ENCODE measurements at regions of chr1 and their contacts with region 1.

Region 1: GRCh38 chr1:110209715-110210603 is at the start of gene KCNC4:
- DNase-seq: peak; percentile 91
- ATAC-seq: peak; percentile 89 to 93 (median 92)
- H3K4me3 ChIP-seq: peak within 1 kb of the TSS; percentile 51 to 95 (median 74)
- H3K27ac ChIP-seq: peak within 1 kb of the TSS; percentile 62 to 94 (median 90)
- H3K4me1 ChIP-seq: peaks cover 4 to 54% (median 39%) of the 10 kb centered on the region in 9 donors
- H3K27me3 ChIP-seq: peaks cover 0 to 24% (median 0%) of the 10 kb centered on the region in 7 donors
- CTCF ChIP-seq: peak in 2 of 9 donors; percentile 13 to 24
- total RNA-seq, gene KCNC4: 2.6 to 13.8 (median 6.1) TPM

Region 2: DNA sequence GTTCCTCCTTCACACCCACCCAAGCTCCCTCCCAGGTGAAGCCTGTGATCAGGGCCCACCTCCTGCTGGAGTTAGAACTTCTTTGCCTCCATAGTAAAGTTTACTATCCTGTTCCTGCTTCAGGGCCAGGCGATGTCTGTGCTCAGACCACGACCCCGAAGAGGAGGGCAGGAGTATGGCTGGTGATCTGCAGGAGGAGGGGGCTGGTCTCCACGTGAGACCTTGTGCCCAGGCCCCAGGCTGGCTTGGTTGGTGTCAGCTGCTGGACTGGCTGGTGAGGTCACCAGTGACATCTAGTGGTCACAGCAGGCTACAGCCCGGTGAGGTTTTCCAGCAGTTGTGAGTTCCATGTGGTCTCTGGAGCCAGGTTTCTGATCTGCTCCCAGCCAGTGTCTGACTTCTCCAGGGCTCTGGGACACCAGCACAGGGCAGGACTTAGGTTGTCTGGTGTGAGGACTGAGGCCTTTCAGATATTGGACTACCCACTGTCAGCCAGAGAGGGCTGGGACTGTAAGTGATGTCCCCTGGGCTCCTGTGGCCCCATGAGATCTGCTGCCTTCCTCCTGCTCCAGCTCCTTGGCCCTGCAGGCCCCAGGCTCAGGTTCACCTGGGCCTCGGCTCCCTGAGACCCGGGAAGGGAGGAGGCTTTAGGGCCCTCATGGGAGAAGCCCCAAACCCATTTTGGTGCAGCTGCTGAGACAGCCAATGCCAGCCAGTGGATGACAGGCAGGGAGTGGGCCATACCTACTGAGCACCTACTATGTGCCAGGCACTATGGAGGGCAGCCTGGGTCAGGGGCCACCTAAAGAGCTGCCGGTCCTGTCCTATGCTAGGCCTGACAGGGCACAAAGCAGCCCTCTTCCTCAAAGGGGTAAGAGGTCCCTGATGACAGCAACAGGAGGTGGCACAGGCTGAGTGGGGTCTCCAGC is 103.7 kb before region 1 on chr1:
- intact Hi-C with region 1: no loop called
- DNase-seq: peak; percentile 52 to 69
- ATAC-seq: peak; percentile 50 to 86 (median 84)
- H3K4me3 ChIP-seq: no peak overlapping the region
- H3K27ac ChIP-seq: no peak overlapping the region
- H3K4me1 ChIP-seq: peaks cover 0 to 18% (median 8%) of the 10 kb centered on the region in 9 donors
- H3K27me3 ChIP-seq: peaks cover 0 to 15% (median 0%) of the 10 kb centered on the region in 7 donors
- CTCF ChIP-seq: peak; percentile 84 to 97 (median 94)

Region 3: GRCh38 chr1:110235834-110236682 is 26.1 kb after region 1 on chr1:
- intact Hi-C with region 1: loop called in 1 of 10 experiments (anchors 2 kb)
- DNase-seq: no peak
- ATAC-seq: peak in 2 of 8 donors; percentile 21 to 60
- H3K4me3 ChIP-seq: no peak overlapping the region
- H3K27ac ChIP-seq: peak overlapping the region in 7 of 10 donors; percentile 36 to 85 (median 69)
- H3K4me1 ChIP-seq: peaks cover 0 to 56% (median 32%) of the 10 kb centered on the region in 9 donors
- H3K27me3 ChIP-seq: no peaks in the 10 kb centered on the region
- CTCF ChIP-seq: no peak

Region 4: DNA sequence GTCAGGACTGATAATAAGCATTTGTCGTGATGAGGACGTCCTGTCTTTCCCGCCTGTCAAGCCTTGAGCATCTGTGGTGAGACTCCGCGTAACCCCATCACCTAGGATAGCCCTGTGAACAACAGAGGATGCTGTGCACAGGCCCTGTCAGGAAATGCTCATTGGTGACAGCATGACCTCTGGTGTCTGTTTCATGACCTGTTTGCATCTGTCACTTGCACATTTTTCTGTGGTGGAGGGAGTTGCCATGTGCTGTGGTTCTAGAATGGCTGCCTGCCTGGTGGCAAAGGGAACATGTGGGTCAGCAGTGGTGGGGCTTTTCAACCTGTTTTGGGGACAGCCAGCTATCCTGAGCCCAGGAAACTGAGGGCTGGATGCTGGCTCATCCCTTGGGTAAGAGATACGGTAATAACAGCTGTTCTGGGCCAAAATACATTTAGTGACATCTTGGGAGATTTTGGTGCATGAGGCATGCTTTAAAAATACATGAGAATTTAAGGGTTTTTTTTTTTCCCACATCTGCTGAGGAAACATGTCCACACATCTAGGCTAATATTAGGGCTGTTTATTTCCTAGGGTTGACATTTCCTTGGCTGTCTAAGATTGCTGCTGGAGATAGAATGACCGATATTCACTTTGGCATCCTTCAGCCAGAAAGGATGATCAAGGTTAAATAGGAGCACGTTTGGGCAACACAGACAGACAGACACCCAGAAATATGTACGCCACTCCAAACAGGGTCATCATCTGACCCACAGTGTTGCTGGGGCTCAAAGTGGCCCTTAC is 53.1 kb after region 1 on chr1:
- intact Hi-C with region 1: loop called in 5 of 10 experiments (anchors 5 to 10 kb)
- DNase-seq: peak in 1 of 2 donors; percentile 21
- ATAC-seq: peak in 7 of 8 donors; percentile 29 to 73 (median 48)
- H3K4me3 ChIP-seq: no peak overlapping the region
- H3K27ac ChIP-seq: peak overlapping the region in 6 of 10 donors; percentile 29 to 56 (median 53)
- H3K4me1 ChIP-seq: peaks cover 0 to 35% (median 19%) of the 10 kb centered on the region in 9 donors
- H3K27me3 ChIP-seq: no peaks in the 10 kb centered on the region
- CTCF ChIP-seq: peak in 1 of 9 donors; percentile 11

Region 5: DNA sequence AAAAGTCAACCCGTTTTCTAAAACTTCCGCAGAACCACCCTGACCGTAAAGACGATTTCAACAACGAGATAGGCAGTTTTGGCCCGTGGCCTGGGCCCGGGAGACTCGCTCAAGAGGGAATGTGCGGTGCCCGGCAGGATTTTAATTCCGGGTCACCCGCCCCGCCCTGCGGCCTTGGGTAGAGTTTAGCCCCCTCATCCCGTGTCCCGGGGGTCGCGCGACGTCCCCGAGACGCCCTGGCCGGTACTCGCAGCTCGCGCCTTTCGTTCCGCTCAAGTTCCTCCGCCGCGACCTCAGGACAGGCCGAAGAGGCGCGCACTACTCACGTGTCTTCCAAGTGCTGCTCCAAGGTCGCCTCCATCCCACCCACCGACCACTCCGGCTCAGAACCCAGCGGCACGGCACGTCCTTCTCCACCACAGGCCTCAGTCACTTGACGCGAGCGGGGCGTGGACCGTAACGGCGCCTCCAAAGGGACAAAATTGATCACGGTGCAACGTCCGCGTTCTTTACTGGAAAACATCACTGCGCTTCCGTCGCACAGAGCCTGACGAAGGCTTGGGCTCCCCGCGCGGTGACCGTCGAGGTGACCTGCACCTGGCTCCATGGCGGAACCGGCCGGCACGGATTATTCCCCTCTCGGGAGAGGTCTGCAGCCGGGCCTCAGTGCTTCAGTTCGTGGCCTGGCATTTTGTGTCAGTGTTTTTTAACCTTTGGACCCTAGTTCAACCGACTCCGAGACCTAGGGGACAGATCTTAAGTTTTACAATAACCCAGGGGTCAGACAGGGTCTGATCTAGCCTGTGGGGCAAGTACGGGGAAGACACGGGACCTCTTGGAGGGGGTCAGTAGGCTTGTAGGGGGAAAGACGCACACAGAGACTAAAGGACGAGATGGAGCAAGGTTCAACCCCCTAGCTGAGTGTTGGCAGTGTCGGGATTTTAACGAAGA is 197.6 kb after region 1 on chr1 and contains the start of gene LAMTOR5:
- intact Hi-C with region 1: loop called in 3 of 10 experiments (anchors 2 to 5 kb)
- DNase-seq: peak; percentile 92 to 97
- ATAC-seq: peak; percentile 95 to 99 (median 98)
- H3K4me3 ChIP-seq: peak within 1 kb of the TSS; percentile 52 to 99 (median 78)
- H3K27ac ChIP-seq: peak within 1 kb of the TSS; percentile 83 to 98 (median 94)
- H3K4me1 ChIP-seq: peaks cover 2 to 35% (median 24%) of the 10 kb centered on the region in 9 donors
- H3K27me3 ChIP-seq: no peaks in the 10 kb centered on the region
- CTCF ChIP-seq: peak in 5 of 9 donors; percentile 15 to 38 (median 27)
- total RNA-seq, gene LAMTOR5: 209 to 268 (median 245) TPM

Region 6: GRCh38 chr1:110460253-110461220 is 250.6 kb after region 1 on chr1:
- intact Hi-C with region 1: loop called in 3 of 10 experiments (anchors 2 kb)
- DNase-seq: peak; percentile 45 to 76
- ATAC-seq: peak; percentile 76 to 85 (median 81)
- H3K4me3 ChIP-seq: no peak overlapping the region
- H3K27ac ChIP-seq: no peak overlapping the region
- H3K4me1 ChIP-seq: no peaks in the 10 kb centered on the region
- H3K27me3 ChIP-seq: no peaks in the 10 kb centered on the region
- CTCF ChIP-seq: peak; percentile 78 to 98 (median 95)